ENCODE measurements at regions of chr18 and their contacts with region 1.

Region 1: DNA sequence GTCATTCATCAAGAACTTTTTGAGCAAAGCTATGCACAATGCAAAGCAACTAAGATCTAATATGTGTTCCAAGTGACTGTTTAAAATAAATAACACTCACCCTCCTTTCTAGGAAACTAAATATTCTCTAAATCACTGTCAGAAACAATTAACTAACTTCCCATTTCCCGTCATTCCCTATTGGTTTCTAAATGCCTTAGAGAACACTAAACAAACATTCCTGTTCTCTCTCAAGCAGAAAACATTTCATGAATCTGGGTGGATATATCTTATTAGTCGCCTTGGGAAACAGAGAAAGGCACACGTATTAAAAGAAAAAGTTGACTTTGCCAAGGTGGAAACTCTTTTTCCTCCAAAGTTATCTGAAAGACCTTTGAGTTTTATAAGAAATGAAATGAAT is 735.2 kb downstream of the MBD2 start:
- DNase-seq: no peak
- ATAC-seq: no peak
- H3K4me3 ChIP-seq: no peak overlapping the region
- H3K27ac ChIP-seq: no peak overlapping the region
- H3K4me1 ChIP-seq: peaks cover 0 to 4% (median 0%) of the 10 kb centered on the region in 9 donors
- H3K27me3 ChIP-seq: no peaks in the 10 kb centered on the region
- CTCF ChIP-seq: no peak

Region 2: GRCh38 chr18:53551868-53552426 is 62.7 kb after region 1 on chr18:
- intact Hi-C with region 1: loop called in 1 of 10 experiments (anchors 2 kb)
- DNase-seq: peak; percentile 8 to 9
- ATAC-seq: peak in 3 of 8 donors; percentile 8 to 78 (median 52)
- H3K4me3 ChIP-seq: no peak overlapping the region
- H3K27ac ChIP-seq: no peak overlapping the region
- H3K4me1 ChIP-seq: no peaks in the 10 kb centered on the region
- H3K27me3 ChIP-seq: no peaks in the 10 kb centered on the region
- CTCF ChIP-seq: no peak

Measured in heart right ventricle (tissue), 16 donors.